A549 (cell line): ENCODE measurements at regions of chr2 and their contacts with region 1.

Region 1: DNA sequence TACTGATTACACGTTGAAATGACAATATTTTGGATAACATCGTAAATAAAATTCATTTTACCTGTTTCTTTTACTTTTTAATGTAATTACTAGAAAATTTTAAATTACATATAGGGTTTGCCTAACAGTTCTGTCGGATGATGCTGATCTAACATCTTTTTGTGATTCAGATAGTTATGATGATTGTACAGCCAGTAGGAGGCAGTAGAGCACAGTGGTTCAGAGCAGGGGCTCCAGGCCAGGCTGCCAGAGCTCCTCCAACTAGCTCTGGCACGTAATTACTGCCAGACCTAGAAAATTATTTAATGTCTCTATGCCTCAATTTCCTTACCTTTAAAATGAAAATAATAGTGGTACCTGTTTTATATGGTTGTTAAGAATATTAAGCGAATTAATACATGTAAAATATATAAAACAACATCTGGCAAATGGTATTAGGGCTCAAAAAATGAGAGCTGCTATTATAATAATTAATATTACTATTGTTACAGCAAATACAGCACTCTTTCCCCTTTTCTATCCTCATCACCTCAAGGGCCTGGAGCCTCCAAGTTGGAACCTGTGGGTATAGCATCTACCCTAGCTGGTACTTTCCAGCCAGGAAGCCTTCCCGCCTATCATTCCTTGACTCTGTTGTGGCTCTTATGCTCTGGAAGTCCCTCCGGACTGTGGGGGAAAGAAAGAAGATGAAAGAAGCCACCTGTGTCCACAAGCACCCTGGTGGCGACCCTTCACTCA is 47.7 kb upstream of the PLA2R1 start:
- DNase-seq: peak; percentile 35 to 81
- ATAC-seq: peak; percentile 89 to 99; a peak in 5 of 6 replicates
- H3K4me3 ChIP-seq: no peak overlapping the region
- H3K27ac ChIP-seq: peak overlapping the region; percentile 46 to 80
- H3K4me1 ChIP-seq: peaks cover 10% of the 10 kb centered on the region
- CTCF ChIP-seq: peak; percentile 96
- EP300 ChIP-seq: no peak
- POLR2A ChIP-seq: no peak
- RAD21 ChIP-seq: peak; percentile 98

Region 2: GRCh38 chr2:160087854-160088745 is 22.0 kb before region 1 on chr2:
- CTCF ChIA-PET with region 1: interaction called, 10 read pairs
- POLR2A ChIA-PET with region 1: no interaction called
- DNase-seq: peak; percentile 35 to 62
- ATAC-seq: peak; percentile 92 to 93
- H3K4me3 ChIP-seq: no peak overlapping the region
- H3K27ac ChIP-seq: peak overlapping the region; percentile 0 to 67; a peak in 3 of 6 replicates
- H3K4me1 ChIP-seq: peaks cover 10% of the 10 kb centered on the region
- CTCF ChIP-seq: peak; percentile 86
- EP300 ChIP-seq: no peak
- POLR2A ChIP-seq: no peak
- RAD21 ChIP-seq: peak; percentile 90 to 92

Region 3: DNA sequence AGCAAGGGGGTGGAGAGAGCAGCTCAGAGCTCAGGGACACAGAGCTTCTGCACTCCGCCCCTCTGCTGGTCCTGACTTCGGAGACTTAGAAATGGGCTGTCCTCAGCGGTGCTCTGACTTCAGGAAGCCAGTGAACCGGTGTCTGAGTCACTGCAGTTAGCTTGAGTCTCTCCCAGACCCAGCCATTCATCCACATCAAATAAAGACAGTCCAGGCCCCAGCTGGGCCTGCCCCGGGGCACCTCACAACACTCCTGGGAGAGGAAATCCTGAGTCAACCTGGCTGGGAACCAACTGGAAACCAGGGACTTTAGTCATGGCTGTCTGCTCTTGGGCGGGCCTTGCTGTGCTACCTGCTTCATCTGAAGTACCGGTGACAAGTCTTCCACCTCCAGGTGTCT is 95.4 kb after region 1 on chr2:
- CTCF ChIA-PET with region 1: interaction called, 46 read pairs
- POLR2A ChIA-PET with region 1: interaction called, 4 read pairs
- DNase-seq: peak; percentile 90 to 96
- ATAC-seq: peak; percentile 86 to 88
- H3K4me3 ChIP-seq: no peak overlapping the region
- H3K27ac ChIP-seq: peak overlapping the region; percentile 97 to 99
- H3K4me1 ChIP-seq: peaks cover 70% of the 10 kb centered on the region
- CTCF ChIP-seq: no peak
- EP300 ChIP-seq: peak; percentile 34 to 70; a peak in 2 of 5 replicates
- POLR2A ChIP-seq: no peak
- RAD21 ChIP-seq: peak in 1 of 2 experiments; percentile 0; a peak in 2 of 5 replicates

Region 4: DNA sequence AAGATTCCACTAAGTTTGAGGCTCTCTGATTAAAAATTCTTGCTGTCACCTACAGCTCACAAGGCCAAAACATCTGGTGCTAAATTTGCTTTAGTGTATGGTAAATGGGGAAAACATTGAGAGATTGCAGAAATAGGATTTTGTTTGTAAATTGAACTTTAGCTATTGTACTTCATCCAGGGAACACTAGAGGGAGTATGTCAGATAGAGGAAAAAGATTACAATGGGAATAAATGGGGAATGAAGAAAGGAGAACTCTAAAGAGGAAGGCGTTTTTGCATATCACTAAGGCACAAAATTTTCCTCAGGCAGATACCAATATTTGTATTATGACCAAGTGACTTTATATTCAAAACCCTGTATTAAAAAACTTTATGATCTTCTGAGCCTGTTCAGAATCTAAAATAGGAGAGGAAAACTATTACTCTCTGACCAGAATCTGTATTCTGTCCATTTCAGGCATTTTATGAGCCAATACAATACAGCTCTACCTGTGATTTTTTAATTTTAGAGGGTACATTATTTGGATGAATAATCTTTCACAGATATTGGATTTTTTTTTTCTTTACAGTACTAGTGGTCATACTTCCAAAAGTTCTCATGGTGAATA is 142.3 kb after region 1 on chr2:
- CTCF ChIA-PET with region 1: interaction called, 16 read pairs
- POLR2A ChIA-PET with region 1: interaction called, 4 read pairs
- DNase-seq: peak; percentile 56 to 62
- ATAC-seq: peak; percentile 38 to 54; a peak in 3 of 6 replicates
- H3K4me3 ChIP-seq: peak overlapping the region; percentile 34; the same call in 1 of the 3 replicates
- H3K27ac ChIP-seq: peak overlapping the region; percentile 73 to 84
- H3K4me1 ChIP-seq: peaks cover 50% of the 10 kb centered on the region
- CTCF ChIP-seq: peak; percentile 78
- EP300 ChIP-seq: no peak
- POLR2A ChIP-seq: no peak
- RAD21 ChIP-seq: peak; percentile 66 to 71; a peak in 4 of 5 replicates

Region 5: DNA sequence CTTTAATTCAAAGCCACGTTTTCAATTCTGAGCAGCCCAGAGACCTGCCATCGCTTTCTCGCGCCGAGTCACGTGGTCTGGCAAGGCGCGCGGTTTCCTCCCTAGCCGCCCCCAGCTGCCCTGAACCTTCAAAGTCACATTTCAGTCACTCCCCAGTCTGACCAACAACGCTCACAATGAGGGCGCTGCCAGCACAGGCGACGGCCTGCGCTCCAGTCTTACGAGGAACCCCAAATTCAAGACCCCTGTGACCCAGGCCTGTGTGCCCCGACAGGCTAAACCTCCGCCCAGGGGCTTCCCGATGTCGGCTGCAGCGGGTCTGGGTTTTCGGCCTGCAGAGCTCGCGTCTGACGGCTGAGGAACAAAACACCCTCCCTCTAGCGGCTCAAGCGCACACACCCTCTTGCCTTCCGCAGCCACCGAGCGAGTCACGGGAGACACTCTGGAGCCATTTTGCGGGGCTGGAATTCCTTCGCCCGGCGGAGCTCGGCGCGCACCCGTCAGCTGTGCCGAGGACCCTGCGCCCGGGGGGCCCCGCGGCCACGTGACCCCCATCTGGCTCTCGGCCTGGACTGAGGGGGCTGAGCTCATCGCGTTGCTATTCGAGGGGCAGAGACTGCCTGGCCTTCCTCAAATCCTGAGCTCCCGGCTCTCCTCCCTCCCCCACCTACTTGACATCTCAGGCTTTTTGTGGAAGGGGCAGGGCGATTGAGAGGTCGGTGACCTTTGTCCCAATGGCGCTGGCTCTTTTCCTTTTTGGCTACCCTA is 159.9 kb after region 1 on chr2:
- CTCF ChIA-PET with region 1: interaction called, 28 read pairs
- POLR2A ChIA-PET with region 1: interaction called, 3 read pairs
- DNase-seq: peak; percentile 83 to 92
- ATAC-seq: peak; percentile 91
- H3K4me3 ChIP-seq: peak overlapping the region; percentile 39
- H3K27ac ChIP-seq: peak overlapping the region; percentile 94 to 96
- H3K4me1 ChIP-seq: peaks cover 74% of the 10 kb centered on the region
- CTCF ChIP-seq: peak; percentile 43
- EP300 ChIP-seq: peak in 1 of 2 experiments; percentile 51; a peak in 1 of 5 replicates
- POLR2A ChIP-seq: no peak
- RAD21 ChIP-seq: peak; percentile 44 to 73

Region 6: GRCh38 chr2:160970052-160970965 is 860.2 kb after region 1 on chr2:
- CTCF ChIA-PET with region 1: interaction called, 17 read pairs
- POLR2A ChIA-PET with region 1: no interaction called
- DNase-seq: peak; percentile 55 to 85
- ATAC-seq: peak; percentile 93 to 94
- H3K4me3 ChIP-seq: peak overlapping the region; percentile 29; the same call in 2 of the 3 replicates
- H3K27ac ChIP-seq: peak overlapping the region; percentile 91
- H3K4me1 ChIP-seq: peaks cover 9% of the 10 kb centered on the region; the same call in 1 of the 3 replicates
- CTCF ChIP-seq: peak; percentile 91
- EP300 ChIP-seq: no peak
- POLR2A ChIP-seq: no peak
- RAD21 ChIP-seq: peak; percentile 94 to 98

Region 7: DNA sequence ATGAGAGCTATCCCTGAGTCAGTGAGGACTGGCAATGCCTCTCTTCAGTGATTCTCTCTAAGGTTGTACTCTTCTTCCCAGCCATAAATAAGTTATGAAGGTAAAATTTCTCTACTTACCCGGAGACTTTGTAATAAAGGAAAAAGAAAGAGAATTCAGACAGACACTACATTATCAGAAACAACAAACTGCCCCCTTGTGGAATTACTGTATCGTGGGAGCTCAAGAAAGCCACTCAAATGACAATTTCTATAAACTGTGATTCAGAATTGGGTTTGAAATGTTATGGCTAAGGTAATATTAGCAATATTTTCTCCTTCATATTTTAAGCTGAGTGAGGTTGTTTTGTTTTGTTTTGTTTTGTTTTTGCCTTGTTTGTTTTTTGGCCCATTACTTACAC is 894.3 kb after region 1 on chr2:
- CTCF ChIA-PET with region 1: interaction called, 12 read pairs
- POLR2A ChIA-PET with region 1: no interaction called
- DNase-seq: peak; percentile 5 to 24
- ATAC-seq: peak in 1 of 2 experiments; percentile 65; a peak in 3 of 6 replicates
- H3K4me3 ChIP-seq: no peak overlapping the region
- H3K27ac ChIP-seq: no peak overlapping the region
- H3K4me1 ChIP-seq: no peaks in the 10 kb centered on the region
- CTCF ChIP-seq: peak; percentile 47
- EP300 ChIP-seq: no peak
- POLR2A ChIP-seq: no peak
- RAD21 ChIP-seq: peak; percentile 54 to 59